Activated naive CD4-positive, alpha-beta T cell treated with anti-CD3 and anti-CD28 coated beads for 36 hours (primary cell): ENCODE measurements at regions of chr4 and their contacts with region 1.

Region 1: GRCh38 chr4:128863312-128864075 is 54.0 kb downstream of the JADE1 start:
- DNase-seq: peak; percentile 75
- H3K4me3 Mint-ChIP-seq: no peak overlapping the region
- H3K27ac Mint-ChIP-seq: peak overlapping the region; percentile 62
- H3K4me1 Mint-ChIP-seq: peaks cover 48% of the 10 kb centered on the region
- H3K27me3 Mint-ChIP-seq: no peaks in the 10 kb centered on the region

Region 2: GRCh38 chr4:128782076-128782715 is 81.3 kb before region 1 on chr4:
- CTCF ChIA-PET with region 1: no interaction called
- intact Hi-C with region 1: loop called (anchors 1 kb)
- DNase-seq: peak; percentile 62
- H3K4me3 Mint-ChIP-seq: no peak overlapping the region
- H3K27ac Mint-ChIP-seq: no peak overlapping the region
- H3K4me1 Mint-ChIP-seq: no peaks in the 10 kb centered on the region
- H3K27me3 Mint-ChIP-seq: no peaks in the 10 kb centered on the region

Region 3: DNA sequence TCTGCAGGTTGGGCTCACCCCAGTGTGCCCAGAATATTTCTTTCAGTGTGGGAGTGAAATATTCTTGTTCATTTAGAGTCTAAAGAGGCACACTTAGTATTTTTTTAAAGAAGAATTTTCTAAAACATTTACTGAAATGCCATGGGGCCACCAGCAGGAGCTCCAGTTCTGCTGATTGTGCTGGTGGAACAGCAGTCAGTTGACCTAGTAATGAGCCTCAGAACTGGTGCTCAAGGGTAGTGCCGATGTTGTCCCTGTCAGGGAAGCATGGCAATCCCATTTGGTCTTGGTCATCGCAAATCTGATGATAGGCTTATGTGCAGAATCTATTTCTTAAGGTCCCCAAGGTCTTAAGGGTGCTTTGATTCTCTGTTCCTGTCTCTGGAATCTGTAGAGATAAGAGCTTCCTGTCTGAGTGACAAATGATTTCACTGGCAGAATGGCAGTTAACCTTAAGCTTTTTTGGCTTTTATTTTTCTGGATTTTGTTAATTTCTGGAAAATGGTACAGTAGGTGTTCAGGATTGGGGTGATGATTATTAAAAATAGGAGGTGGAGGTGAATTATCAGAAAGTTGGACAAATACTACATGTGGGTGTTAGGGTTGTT is 22.7 kb before region 1 on chr4:
- CTCF ChIA-PET with region 1: interaction called, 3 read pairs
- intact Hi-C with region 1: loop called (anchors 2 kb)
- DNase-seq: no peak
- H3K4me3 Mint-ChIP-seq: no peak overlapping the region
- H3K27ac Mint-ChIP-seq: peak overlapping the region; percentile 64
- H3K4me1 Mint-ChIP-seq: peaks cover 57% of the 10 kb centered on the region
- H3K27me3 Mint-ChIP-seq: no peaks in the 10 kb centered on the region